Common myeloid progenitor, CD34-positive (primary cell): ENCODE measurements at regions of chr16 and their contacts with region 1.

Region 1: DNA sequence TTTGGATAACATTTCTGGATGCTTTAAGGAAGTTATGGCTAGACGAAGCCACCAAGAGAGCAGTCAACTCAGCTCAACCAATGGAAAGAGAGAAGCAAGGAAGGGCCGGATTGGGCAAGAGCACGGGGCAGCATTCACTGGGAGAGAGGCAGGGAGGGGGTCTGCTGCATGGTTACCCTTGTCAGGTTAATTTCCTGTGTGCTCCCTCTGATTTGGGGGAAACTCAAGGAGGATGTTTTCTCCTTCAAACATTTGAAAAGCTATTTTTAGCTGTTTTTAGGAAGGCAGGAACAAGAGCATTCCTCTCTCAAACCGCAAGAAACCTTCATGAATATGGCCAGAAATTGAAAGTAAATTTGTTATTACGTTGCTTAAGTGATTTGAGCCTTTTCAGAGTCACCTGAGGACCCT is 118.5 kb upstream of the ZFHX3 start:
- DNase-seq: peak in 2 of 3 donors; percentile 37 to 62
- H3K4me3 ChIP-seq: peak overlapping the region in 5 of 7 experiments; percentile 11 to 64 (median 52)
- H3K27ac ChIP-seq: no peak overlapping the region
- H3K4me1 ChIP-seq: peaks cover 9 to 21% (median 14%) of the 10 kb centered on the region in 4 experiments
- H3K27me3 ChIP-seq: no peaks in the 10 kb centered on the region

Region 2: DNA sequence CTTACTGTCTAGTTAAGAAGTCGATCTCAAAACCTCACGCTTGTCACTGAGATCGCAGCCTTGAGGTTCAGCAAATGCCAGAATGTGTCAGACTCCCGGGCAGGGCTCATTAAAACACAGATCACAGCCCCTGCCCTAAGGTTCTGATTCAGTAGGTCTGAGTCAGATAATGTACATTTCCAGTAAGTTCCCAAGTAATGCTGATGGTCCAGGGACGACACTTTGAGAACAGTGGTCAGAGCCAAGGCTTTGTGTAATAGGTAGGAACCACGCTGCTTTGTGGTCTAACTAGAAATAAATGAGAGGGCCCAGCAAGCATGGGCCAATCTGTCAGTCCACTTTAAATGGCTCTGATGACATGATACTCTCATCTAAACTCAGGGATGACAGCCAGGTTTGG is 347.1 kb before region 1 on chr16:
- CTCF ChIA-PET with region 1: no interaction called
- POLR2A ChIA-PET with region 1: no interaction called
- DNase-seq: no peak
- H3K4me3 ChIP-seq: no peak overlapping the region
- H3K27ac ChIP-seq: no peak overlapping the region
- H3K4me1 ChIP-seq: no peaks in the 10 kb centered on the region
- H3K27me3 ChIP-seq: no peaks in the 10 kb centered on the region

Region 3: GRCh38 chr16:73179705-73180677 is 13.5 kb after region 1 on chr16:
- CTCF ChIA-PET with region 1: interaction called, 22 read pairs
- POLR2A ChIA-PET with region 1: interaction called, 5 read pairs
- DNase-seq: no peak
- H3K4me3 ChIP-seq: no peak overlapping the region
- H3K27ac ChIP-seq: no peak overlapping the region
- H3K4me1 ChIP-seq: no peaks in the 10 kb centered on the region
- H3K27me3 ChIP-seq: no peaks in the 10 kb centered on the region